Activated CD8-positive, alpha-beta T cell treated with anti-CD3 and anti-CD28 coated beads for 36 hours (primary cell): ENCODE measurements at regions of chr12 and their contacts with region 1.

Region 1: DNA sequence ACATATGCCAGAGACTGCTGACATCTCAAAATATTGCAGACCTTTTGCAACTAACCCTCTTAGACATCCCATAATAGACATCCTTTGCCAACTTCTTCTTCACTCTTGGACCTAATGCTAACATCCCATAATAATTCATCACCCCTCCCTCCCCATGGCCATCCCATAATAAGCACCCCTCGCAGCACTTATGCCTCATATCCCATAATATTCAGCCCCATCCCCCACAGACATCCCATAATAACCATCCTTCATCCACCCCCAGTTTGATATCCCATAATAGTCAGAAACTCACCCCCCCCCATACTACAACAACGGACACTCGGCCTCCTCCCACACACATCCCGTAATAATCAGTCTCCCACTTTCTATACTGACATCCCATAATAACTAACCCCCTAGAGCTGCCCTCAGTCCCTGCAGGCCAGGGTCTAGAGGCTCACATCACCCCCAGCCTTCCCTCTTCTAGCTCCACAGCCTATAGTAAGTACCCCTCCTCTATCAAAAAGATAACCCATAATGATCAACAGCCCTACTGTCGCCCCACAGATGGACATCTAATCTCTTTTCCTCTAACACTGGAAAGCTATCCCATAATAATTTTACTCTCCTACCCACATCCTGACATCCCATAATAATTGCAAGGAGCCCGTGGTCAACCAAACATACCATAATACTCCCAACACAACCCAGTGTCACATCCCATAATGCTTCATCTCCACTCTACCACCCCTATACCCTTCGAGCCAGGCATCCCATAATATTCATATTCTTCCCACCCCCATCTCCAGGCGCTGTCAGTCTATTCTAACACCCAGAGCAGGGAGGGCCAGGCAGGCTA is 792 bp upstream of the CHD4 start:
- DNase-seq: peak; percentile 89
- ATAC-seq: peak; percentile 67
- H3K4me3 Mint-ChIP-seq: no peak overlapping the region
- H3K27ac Mint-ChIP-seq: no peak overlapping the region
- H3K4me1 Mint-ChIP-seq: peaks cover 54% of the 10 kb centered on the region
- H3K27me3 Mint-ChIP-seq: no peaks in the 10 kb centered on the region
- CTCF ChIP-seq: no peak

Region 2: GRCh38 chr12:6563448-6564050 is 44.4 kb before region 1 on chr12:
- CTCF ChIA-PET with region 1: interaction called, 11 read pairs
- POLR2A ChIA-PET with region 1: interaction called, 11 read pairs
- intact Hi-C with region 1: no loop called
- DNase-seq: peak; percentile 85
- ATAC-seq: peak; percentile 33
- H3K4me3 Mint-ChIP-seq: no peak overlapping the region
- H3K27ac Mint-ChIP-seq: peak overlapping the region; percentile 4
- H3K4me1 Mint-ChIP-seq: peaks cover 47% of the 10 kb centered on the region
- H3K27me3 Mint-ChIP-seq: no peaks in the 10 kb centered on the region
- CTCF ChIP-seq: peak; percentile 76

Region 3: DNA sequence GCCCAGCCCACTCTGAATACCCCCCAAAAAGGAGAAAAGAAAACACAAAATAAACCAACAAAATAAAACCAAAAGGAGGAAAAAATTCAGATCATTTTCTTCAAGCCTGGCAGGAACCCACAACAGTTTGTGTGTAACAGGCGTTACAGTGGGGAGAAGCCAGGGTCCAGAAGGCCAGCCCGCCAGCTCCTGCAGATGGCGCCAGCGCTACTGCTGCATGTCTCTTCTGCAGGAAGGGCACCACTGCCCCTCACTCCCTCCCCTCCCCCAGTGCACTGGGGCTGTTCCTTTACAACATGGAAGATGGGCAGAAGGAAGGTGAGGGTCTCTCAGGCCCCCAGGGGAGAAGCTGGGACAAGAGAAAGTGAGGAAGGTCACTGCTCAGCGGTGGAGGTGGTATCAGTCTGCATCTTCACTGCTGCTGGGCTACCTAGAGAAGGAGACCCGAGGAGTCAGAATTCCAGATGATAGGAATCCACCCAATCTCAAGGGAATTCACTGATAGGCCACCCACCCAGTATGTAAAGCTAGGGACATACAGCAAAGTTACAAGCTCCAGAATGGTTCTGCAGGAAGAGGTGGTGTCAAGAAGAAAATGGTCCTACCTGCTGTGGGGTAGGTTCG is 37.6 kb before region 1 on chr12:
- CTCF ChIA-PET with region 1: interaction called, 17 read pairs
- POLR2A ChIA-PET with region 1: interaction called, 11 read pairs
- intact Hi-C with region 1: loop called (anchors 5 kb)
- DNase-seq: peak; percentile 73
- ATAC-seq: peak; percentile 29
- H3K4me3 Mint-ChIP-seq: no peak overlapping the region
- H3K27ac Mint-ChIP-seq: peak overlapping the region; percentile 10
- H3K4me1 Mint-ChIP-seq: peaks cover 44% of the 10 kb centered on the region
- H3K27me3 Mint-ChIP-seq: no peaks in the 10 kb centered on the region
- CTCF ChIP-seq: peak; percentile 76

Region 4: DNA sequence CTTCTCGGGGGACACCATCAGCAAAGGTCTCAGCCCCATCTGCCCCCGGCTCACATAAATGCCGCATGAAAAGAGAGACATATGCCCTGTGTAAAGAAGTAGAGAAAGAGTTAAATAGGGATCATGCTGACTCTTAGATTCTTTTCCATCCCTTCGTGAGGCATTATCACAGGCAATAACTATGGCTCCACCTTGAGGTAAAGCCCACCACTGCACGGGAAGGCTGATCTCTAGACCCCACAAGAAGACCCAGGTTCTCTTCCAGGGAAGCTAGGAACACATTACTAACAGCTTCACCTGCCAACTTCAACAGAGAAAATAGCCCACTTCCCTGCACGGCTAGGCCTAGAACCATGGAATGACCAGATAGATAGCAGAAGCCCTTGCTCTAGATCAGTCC is 25.8 kb before region 1 on chr12:
- CTCF ChIA-PET with region 1: no interaction called
- POLR2A ChIA-PET with region 1: interaction called, 27 read pairs
- intact Hi-C with region 1: no loop called
- DNase-seq: no peak
- ATAC-seq: no peak
- H3K4me3 Mint-ChIP-seq: no peak overlapping the region
- H3K27ac Mint-ChIP-seq: peak overlapping the region; percentile 23
- H3K4me1 Mint-ChIP-seq: peaks cover 4% of the 10 kb centered on the region
- H3K27me3 Mint-ChIP-seq: no peaks in the 10 kb centered on the region
- CTCF ChIP-seq: no peak

Region 5: DNA sequence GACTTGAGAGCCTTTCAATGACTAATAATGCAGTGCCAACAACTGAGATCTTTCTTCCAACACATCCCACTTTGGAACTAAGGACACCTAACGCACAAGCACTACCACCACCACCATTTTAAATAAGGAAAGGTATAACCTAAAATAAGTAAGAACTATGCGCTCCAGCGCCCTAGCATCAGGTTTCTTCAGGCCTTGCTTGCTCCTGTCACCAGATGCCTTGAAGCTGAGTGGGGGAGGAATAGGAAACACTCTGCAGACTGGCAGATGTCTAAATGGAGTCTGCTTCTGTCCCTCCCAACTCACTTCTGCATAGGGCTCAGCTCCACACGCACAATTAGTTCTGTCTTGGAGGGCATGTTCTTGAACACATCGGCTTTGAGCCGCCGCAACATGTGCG is 15.9 kb before region 1 on chr12:
- CTCF ChIA-PET with region 1: interaction called, 3 read pairs
- POLR2A ChIA-PET with region 1: interaction called, 27 read pairs
- intact Hi-C with region 1: no loop called
- DNase-seq: no peak
- ATAC-seq: no peak
- H3K4me3 Mint-ChIP-seq: no peak overlapping the region
- H3K27ac Mint-ChIP-seq: no peak overlapping the region
- H3K4me1 Mint-ChIP-seq: peaks cover 10% of the 10 kb centered on the region
- H3K27me3 Mint-ChIP-seq: no peaks in the 10 kb centered on the region
- CTCF ChIP-seq: no peak